ENCODE measurements at regions of chr18 and their contacts with region 1.

Region 1: DNA sequence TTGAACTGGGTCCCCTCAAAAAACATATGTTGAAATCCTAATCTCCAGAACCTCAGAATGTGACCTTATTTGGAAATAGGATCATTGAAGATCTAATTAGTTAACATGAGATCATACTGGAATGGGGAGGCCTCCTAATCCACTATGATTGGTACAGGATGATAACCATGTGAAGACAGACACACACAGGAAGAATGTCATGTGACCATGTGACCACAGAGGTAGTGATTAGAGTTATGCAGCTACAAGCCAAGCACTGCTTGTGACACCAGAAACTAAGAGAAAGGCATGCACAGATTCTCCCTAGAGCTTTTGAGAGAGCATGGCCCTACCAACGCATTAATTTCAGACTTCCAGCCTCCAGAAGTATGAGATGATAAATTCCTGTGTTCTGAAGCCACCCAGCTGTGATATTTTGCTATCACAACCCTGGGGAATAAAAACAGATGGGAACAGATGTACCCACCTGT is 47.0 kb upstream of the TGIF1 start:
- DNase-seq: no peak
- ATAC-seq: peak; percentile 20
- H3K4me3 Mint-ChIP-seq: peak overlapping the region; percentile 15
- H3K27ac Mint-ChIP-seq: peak overlapping the region; percentile 94
- H3K4me1 Mint-ChIP-seq: peaks cover 60% of the 10 kb centered on the region
- H3K27me3 Mint-ChIP-seq: no peaks in the 10 kb centered on the region
- CTCF ChIP-seq: no peak

Region 2: GRCh38 chr18:2971741-2972552 is 431.1 kb before region 1 on chr18:
- CTCF ChIA-PET with region 1: no interaction called
- POLR2A ChIA-PET with region 1: no interaction called
- intact Hi-C with region 1: loop called (anchors 5 kb)
- DNase-seq: peak; percentile 53
- ATAC-seq: peak; percentile 80
- H3K4me3 Mint-ChIP-seq: peak overlapping the region; percentile 79
- H3K27ac Mint-ChIP-seq: peak overlapping the region; percentile 94
- H3K4me1 Mint-ChIP-seq: peaks cover 82% of the 10 kb centered on the region
- H3K27me3 Mint-ChIP-seq: no peaks in the 10 kb centered on the region
- CTCF ChIP-seq: no peak

Region 3: DNA sequence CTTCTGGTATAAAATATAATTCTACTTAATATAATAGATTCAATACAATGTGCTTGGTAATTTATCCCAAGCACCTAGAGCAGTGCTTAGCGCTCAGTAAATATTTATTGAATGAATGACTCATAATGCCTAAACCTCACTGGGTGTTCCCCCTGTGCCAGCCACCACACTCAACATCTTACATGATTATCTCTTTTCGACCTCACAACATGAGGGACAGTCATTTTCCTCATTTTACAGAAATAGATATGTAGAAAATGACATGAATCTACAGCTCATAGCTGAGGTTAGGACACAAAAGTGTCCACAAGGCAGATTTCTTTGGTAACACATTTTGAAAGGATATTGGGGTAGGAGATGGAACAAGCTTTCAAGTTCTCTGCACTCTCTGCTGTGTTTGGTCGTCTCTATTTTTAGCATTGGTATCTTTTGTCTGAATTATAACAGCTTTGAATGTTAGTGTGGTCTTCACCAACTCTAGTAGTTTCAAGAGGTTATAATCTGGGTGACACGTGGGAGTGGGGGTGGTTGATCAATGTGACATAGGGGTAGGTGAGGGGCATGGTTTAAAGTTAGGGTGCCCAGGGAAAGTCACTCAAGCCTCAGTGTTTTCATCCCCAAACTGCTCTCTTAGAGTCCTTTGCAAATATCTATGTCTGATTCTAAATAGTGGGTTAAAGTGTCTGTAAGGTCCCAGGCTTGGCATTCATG is 193.0 kb before region 1 on chr18:
- CTCF ChIA-PET with region 1: no interaction called
- POLR2A ChIA-PET with region 1: no interaction called
- intact Hi-C with region 1: no loop called
- DNase-seq: no peak
- ATAC-seq: no peak
- H3K4me3 Mint-ChIP-seq: no peak overlapping the region
- H3K27ac Mint-ChIP-seq: no peak overlapping the region
- H3K4me1 Mint-ChIP-seq: no peaks in the 10 kb centered on the region
- H3K27me3 Mint-ChIP-seq: no peaks in the 10 kb centered on the region
- CTCF ChIP-seq: no peak

Region 4: DNA sequence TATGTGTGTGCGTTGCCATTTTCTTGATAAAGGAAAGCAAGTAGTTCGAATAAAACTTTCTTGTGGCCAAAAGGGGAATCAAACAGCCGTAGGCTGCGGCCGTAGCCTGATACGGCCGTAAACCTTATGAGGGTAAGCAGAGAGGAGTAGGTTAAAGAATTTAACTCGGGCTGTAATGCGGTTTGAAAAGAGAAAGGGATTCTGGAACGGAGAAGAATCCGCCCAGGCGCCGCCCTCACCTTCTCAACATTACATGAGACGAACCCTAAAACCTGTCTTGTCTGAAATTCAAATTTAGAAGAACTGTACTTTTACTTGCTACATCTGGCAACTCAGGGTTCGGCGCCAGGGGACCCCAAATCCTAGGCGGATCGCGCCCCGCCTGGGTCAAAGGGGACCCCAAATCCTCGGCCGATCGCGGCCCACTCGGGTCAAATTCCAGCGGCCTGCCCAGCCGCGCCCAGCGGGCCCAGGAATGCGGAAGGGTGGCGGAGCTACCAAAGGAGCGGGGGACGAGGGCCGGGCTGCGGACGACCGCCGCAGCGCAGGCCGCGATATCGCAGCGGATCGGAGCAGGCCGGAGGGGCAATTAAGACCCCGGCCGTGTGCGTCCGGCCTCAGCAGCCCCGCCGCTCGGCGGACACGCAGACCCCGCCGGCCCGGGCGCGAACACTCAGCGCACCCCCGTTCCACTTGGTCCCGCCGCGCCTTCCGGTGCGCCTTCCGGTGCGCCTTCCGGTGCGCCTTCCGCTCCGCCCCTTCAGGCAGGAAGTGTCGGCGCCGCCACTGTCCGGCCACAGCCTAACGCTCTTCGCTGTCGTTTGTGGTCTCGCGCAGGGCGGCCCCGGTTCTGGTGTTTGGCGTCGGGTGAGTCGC is 141.4 kb before region 1 on chr18 and contains the start of gene MYL12B:
- CTCF ChIA-PET with region 1: no interaction called
- POLR2A ChIA-PET with region 1: interaction called, 4 read pairs
- intact Hi-C with region 1: loop called (anchors 5 kb)
- DNase-seq: peak; percentile 81
- ATAC-seq: peak; percentile 83
- H3K4me3 Mint-ChIP-seq: peak within 1 kb of the TSS; percentile 94
- H3K27ac Mint-ChIP-seq: peak within 1 kb of the TSS; percentile 97
- H3K4me1 Mint-ChIP-seq: peaks cover 80% of the 10 kb centered on the region
- H3K27me3 Mint-ChIP-seq: no peaks in the 10 kb centered on the region
- CTCF ChIP-seq: no peak
- total RNA-seq, gene MYL12B: 185 and 198 TPM in 2 replicates

Region 5: DNA sequence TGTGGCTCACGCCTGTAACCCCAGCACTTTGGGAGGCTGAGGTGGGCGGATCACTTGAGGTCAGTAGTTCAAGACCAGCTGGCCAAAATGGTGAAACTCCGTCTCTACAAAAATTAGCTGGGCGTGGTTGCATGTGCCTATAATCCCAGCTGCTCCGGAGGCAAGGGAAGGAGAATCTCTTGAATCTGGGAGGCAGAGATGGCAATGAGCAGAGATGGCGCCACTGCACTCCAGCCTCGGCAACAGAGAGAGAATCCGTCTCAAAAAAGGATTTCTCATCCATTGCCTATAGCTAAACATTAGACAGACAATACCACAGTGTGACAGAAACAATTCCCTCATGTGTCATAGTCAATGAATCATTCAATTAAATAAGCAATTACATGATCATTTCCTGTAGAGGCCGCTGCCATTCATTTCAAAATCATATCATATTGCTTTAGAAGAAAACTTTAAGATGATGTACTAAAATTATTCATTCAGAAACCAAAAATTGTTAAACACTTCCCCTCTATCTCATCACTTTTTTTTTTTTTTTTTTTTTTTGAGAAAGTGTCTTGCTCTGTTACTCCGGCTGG is 22.5 kb before region 1 on chr18:
- CTCF ChIA-PET with region 1: interaction called, 4 read pairs
- POLR2A ChIA-PET with region 1: interaction called, 12 read pairs
- intact Hi-C with region 1: loop called (anchors 1 kb)
- DNase-seq: no peak
- ATAC-seq: peak; percentile 66
- H3K4me3 Mint-ChIP-seq: no peak overlapping the region
- H3K27ac Mint-ChIP-seq: no peak overlapping the region
- H3K4me1 Mint-ChIP-seq: peaks cover 21% of the 10 kb centered on the region
- H3K27me3 Mint-ChIP-seq: no peaks in the 10 kb centered on the region
- CTCF ChIP-seq: no peak

Region 6: DNA sequence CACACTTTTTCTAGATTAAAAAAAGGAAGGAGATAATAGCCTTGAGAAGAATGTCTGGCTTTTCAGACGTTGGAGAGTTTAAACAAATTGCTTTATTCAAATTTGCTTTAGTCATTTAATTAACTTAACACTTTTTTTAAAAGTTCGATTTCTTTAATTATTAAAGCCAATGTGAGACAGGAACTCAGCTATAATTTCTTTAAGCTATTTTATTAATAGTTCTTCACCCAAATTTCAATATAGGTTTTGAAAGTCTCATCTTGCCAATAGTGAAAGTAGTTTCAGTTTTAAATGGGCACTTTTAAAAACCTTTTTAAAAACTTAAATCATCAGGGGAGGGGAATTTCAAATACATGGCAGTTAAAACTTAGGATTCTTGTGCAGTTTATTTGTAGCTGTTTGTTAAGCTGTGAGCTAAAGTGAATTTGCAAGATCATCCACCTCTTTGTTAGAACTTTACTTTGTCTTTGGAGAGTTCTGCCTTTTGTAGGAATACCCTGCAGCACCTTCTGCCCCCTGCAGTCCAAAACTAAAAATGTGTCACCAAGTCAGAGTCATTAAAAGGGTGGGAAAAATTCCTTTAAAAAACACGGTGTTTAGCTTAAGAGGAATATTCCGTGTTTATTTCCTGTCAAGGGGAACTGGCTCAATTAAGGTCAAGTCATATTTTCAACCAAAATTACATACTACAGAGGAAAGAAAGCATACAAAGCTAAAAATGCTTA is 51.5 kb after region 1 on chr18:
- CTCF ChIA-PET with region 1: interaction called, 4 read pairs
- POLR2A ChIA-PET with region 1: interaction called, 143 read pairs
- intact Hi-C with region 1: loop called (anchors 1 kb)
- DNase-seq: no peak
- ATAC-seq: no peak
- H3K4me3 Mint-ChIP-seq: peak overlapping the region; percentile 93
- H3K27ac Mint-ChIP-seq: peak overlapping the region; percentile 95
- H3K4me1 Mint-ChIP-seq: peaks cover 57% of the 10 kb centered on the region
- H3K27me3 Mint-ChIP-seq: no peaks in the 10 kb centered on the region
- CTCF ChIP-seq: no peak

Measured in activated B cell treated with CpG ODN at 0.5 μM for 24 hours (primary cell).